Spleen (tissue), 13 donors: ENCODE measurements at regions of chr22 and their contacts with region 1.

Region 1: GRCh38 chr22:43399338-43399979 is 12.4 kb upstream of the MPPED1 start:
- DNase-seq: peak; percentile 59
- H3K4me3 ChIP-seq: no peak overlapping the region
- H3K27ac ChIP-seq: no peak overlapping the region
- H3K4me1 ChIP-seq: peaks cover 0 to 7% (median 0%) of the 10 kb centered on the region in 6 donors
- H3K27me3 ChIP-seq: peaks cover 0 to 56% (median 0%) of the 10 kb centered on the region in 7 donors
- CTCF ChIP-seq: no peak
- POLR2A ChIP-seq: no peak

Region 2: DNA sequence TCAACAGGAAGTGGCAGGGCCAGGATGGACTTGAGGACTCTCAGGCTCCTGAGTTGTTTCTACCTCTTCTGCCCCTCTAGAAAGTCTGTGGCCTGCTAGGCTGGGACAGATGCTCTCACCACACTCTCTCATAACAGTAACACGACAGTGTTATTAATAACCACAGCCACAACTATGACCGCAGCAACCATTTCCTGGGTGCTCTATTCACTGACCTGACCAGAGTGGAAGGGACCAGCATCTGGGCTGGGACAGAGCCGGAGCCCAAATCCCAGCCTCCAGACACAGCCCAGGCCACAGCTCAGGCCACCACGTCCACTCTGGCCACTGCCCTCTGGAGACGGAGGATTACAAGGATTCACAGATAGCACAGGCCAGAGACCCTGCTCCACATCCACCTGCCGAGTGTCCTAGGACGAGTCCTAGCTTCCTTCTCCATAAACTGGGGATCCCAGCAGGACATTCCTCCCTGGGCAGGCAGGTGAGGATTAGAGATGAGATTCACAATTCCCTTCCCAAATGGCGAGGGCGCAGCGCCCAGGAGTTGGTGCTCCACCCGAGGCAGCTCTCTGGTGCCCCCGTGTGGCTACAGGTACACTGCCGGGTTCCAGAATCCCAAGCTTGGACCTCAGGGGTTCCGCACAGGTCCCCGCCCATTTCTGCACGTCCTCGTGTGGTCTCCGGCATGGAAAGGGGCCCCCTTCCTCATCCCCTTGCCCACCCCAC is 485.3 kb after region 1 on chr22:
- intact Hi-C with region 1: loop called (anchors 10 kb)
- DNase-seq: peak; percentile 82
- H3K4me3 ChIP-seq: peak overlapping the region in 1 of 8 donors; percentile 28
- H3K27ac ChIP-seq: no peak overlapping the region
- H3K4me1 ChIP-seq: peaks cover 0 to 10% (median 6%) of the 10 kb centered on the region in 6 donors
- H3K27me3 ChIP-seq: peaks cover 0 to 90% (median 18%) of the 10 kb centered on the region in 7 donors
- CTCF ChIP-seq: peak in 10 of 11 experiments; percentile 26 to 82 (median 62)
- POLR2A ChIP-seq: no peak